A673 (cell line): ENCODE measurements at regions of chr10 and their contacts with region 1.

Region 1: GRCh38 chr10:131238669-131239280 is 72.7 kb downstream of the TCERG1L start:
- DNase-seq: no peak
- H3K4me3 ChIP-seq: no peak overlapping the region
- H3K27ac ChIP-seq: no peak overlapping the region
- H3K4me1 ChIP-seq: no peaks in the 10 kb centered on the region
- H3K27me3 ChIP-seq: no peaks in the 10 kb centered on the region
- CTCF ChIP-seq: no peak

Region 2: DNA sequence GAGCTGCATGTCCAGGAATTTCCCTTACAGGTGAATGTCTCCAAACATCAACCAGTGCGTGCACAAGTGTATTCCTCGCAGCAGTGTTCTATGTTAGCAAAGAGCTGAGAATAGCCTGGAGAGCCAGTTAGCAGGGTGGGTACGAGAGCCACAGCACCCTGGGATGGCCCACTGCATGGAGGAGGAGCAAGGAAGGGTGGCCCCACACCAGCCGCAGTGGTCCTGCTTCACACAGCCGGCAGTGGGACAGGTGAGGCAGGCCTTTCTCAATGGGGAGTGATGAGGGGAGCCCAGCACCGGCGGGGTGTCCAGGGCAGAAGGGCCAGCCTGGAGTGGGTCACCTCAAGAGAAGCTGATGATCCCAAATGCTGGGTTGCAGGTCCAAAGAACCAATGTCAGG is 167.9 kb before region 1 on chr10:
- CTCF ChIA-PET with region 1: no interaction called
- POLR2A ChIA-PET with region 1: no interaction called
- intact Hi-C with region 1: loop called (anchors 5 kb)
- DNase-seq: no peak
- H3K4me3 ChIP-seq: no peak overlapping the region
- H3K27ac ChIP-seq: no peak overlapping the region
- H3K4me1 ChIP-seq: peaks cover 19% of the 10 kb centered on the region
- H3K27me3 ChIP-seq: no peaks in the 10 kb centered on the region
- CTCF ChIP-seq: no peak